GM12878 (cell line): ENCODE measurements at regions of chr4 and their contacts with region 1.

Region 1: DNA sequence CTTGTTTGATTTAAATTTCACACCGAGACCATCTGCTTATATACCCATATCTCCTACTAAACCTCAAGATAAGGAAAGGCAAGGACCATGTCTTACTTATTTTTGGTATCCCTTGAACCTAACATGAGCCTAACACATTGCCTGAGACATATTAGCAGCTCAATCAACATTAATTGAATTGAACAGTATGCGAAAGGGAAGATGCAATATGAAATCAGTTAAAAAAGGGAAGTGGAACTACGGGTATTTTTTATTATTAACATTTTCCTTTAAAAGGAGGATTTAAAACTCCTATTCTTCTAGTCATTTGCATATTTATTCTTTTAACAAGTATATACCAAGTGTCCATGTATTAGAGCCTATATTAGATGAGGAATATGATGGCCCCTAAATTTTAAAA is 197.0 kb downstream of the CAMK2D start:
- DNase-seq: no peak
- ATAC-seq: peak; percentile 45
- H3K4me3 ChIP-seq: peak overlapping the region; percentile 12; the same call in 1 of the 2 replicates
- H3K27ac ChIP-seq: peak overlapping the region; percentile 60
- H3K4me1 ChIP-seq: peaks cover 38% of the 10 kb centered on the region
- H3K27me3 ChIP-seq: no peaks in the 10 kb centered on the region
- CTCF ChIP-seq: no peak
- EP300 ChIP-seq: no peak
- POLR2A ChIP-seq: no peak
- RAD21 ChIP-seq: no peak

Region 2: GRCh38 chr4:113232194-113232593 is 332.3 kb before region 1 on chr4:
- CTCF ChIA-PET with region 1: no interaction called
- POLR2A ChIA-PET with region 1: no interaction called
- RAD21 ChIA-PET with region 1: no interaction called
- SMC1A ChIA-PET with region 1: no interaction called
- in situ Hi-C with region 1: no loop called
- intact Hi-C with region 1: no loop called
- DNase-seq: no peak
- ATAC-seq: no peak
- H3K4me3 ChIP-seq: no peak overlapping the region
- H3K27ac ChIP-seq: no peak overlapping the region
- H3K4me1 ChIP-seq: no peaks in the 10 kb centered on the region
- H3K27me3 ChIP-seq: no peaks in the 10 kb centered on the region
- CTCF ChIP-seq: no peak
- EP300 ChIP-seq: no peak
- POLR2A ChIP-seq: no peak
- RAD21 ChIP-seq: no peak

Region 3: DNA sequence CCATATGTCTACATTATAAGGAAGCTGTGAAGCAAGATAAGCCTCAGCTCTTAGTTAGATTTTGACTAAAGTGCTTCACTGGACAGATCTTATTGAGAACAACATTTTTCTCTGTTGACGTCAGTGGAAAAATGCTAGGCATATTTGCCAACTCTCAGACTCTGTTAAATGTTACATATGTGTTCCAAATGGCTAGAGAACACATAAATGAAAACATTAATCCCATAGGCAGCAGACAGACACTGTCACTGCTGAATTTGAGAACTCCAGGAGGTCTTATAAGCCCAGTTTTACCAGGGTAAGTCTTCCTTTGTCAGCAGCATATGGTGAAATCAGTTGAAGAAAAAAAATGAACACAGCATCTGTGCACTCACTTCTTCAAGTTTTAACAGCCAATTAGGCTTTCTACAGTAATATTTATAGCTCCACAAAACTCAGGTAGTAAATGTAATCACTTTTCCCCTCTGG is 10.2 kb after region 1 on chr4:
- CTCF ChIA-PET with region 1: interaction called, 12 read pairs
- POLR2A ChIA-PET with region 1: interaction called, 4 read pairs
- RAD21 ChIA-PET with region 1: interaction called, 9 read pairs
- SMC1A ChIA-PET with region 1: interaction called, 151 read pairs
- in situ Hi-C with region 1: no loop called
- intact Hi-C with region 1: no loop called
- DNase-seq: no peak
- ATAC-seq: no peak
- H3K4me3 ChIP-seq: no peak overlapping the region
- H3K27ac ChIP-seq: no peak overlapping the region
- H3K4me1 ChIP-seq: no peaks in the 10 kb centered on the region
- H3K27me3 ChIP-seq: no peaks in the 10 kb centered on the region
- CTCF ChIP-seq: no peak
- EP300 ChIP-seq: no peak
- POLR2A ChIP-seq: no peak
- RAD21 ChIP-seq: no peak

Region 4: DNA sequence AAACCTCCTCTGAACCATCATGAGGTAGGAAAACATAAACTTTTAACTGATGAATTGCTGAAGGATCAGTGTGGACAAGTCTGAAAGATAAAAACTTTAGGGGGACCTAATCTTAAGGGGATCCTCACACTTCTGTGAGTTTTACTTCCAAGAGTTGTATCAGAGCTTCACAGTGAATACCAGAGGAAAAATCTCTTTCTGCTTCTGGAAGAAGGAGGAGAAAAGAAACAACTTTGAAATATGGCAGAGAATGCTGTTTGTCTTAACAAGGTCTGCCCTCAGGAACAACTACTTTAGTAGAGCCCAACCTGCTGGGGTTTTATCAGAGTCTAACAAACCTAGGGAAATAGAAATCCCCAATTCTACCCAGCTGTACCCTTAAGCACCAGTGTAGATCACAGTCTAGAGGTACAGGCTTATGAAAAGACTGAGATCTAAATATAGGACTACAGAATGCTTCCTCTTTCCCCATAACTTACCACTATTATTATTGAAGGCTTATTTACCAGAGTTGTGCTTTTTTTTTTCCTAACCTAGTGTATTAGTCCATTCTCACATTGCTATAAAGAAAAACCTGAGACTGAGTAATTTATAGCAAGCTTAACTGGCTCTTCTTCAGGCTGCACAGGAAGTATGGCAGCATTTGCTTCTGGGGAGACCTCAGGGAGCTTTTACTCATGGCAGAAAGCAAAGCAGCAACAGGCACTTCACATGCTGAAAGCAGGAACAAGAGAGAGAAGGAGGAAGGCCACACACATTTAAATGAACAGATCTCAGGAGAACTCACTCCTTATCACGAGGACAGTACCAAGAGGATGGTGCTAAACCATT is 29.1 kb after region 1 on chr4:
- CTCF ChIA-PET with region 1: interaction called, 3 read pairs
- POLR2A ChIA-PET with region 1: interaction called, 4 read pairs
- RAD21 ChIA-PET with region 1: interaction called, 41 read pairs
- SMC1A ChIA-PET with region 1: interaction called, 32 read pairs
- in situ Hi-C with region 1: no loop called
- intact Hi-C with region 1: no loop called
- DNase-seq: peak; percentile 8
- ATAC-seq: peak; percentile 84
- H3K4me3 ChIP-seq: no peak overlapping the region
- H3K27ac ChIP-seq: no peak overlapping the region; the same call in 1 of the 2 replicates
- H3K4me1 ChIP-seq: peaks cover 10% of the 10 kb centered on the region; the same call in 1 of the 2 replicates
- H3K27me3 ChIP-seq: no peaks in the 10 kb centered on the region
- CTCF ChIP-seq: no peak
- EP300 ChIP-seq: no peak
- POLR2A ChIP-seq: no peak
- RAD21 ChIP-seq: no peak

Region 5: GRCh38 chr4:113645771-113646441 is 81.4 kb after region 1 on chr4:
- CTCF ChIA-PET with region 1: interaction called, 3 read pairs
- POLR2A ChIA-PET with region 1: interaction called, 4 read pairs
- RAD21 ChIA-PET with region 1: interaction called, 16 read pairs
- SMC1A ChIA-PET with region 1: interaction called, 11 read pairs
- in situ Hi-C with region 1: no loop called
- intact Hi-C with region 1: no loop called
- DNase-seq: no peak
- ATAC-seq: no peak
- H3K4me3 ChIP-seq: no peak overlapping the region
- H3K27ac ChIP-seq: no peak overlapping the region
- H3K4me1 ChIP-seq: peaks cover 7% of the 10 kb centered on the region
- H3K27me3 ChIP-seq: no peaks in the 10 kb centered on the region
- CTCF ChIP-seq: no peak
- EP300 ChIP-seq: no peak
- POLR2A ChIP-seq: no peak
- RAD21 ChIP-seq: no peak

Region 6: GRCh38 chr4:113756005-113756410 is 191.5 kb after region 1 on chr4:
- CTCF ChIA-PET with region 1: interaction called, 3 read pairs
- POLR2A ChIA-PET with region 1: interaction called, 7 read pairs
- RAD21 ChIA-PET with region 1: interaction called, 30 read pairs
- SMC1A ChIA-PET with region 1: interaction called, 21 read pairs
- in situ Hi-C with region 1: loop called (anchors 5 kb)
- intact Hi-C with region 1: no loop called
- DNase-seq: peak; percentile 51
- ATAC-seq: peak; percentile 72
- H3K4me3 ChIP-seq: peak overlapping the region; percentile 75; the same call in 1 of the 2 replicates
- H3K27ac ChIP-seq: peak overlapping the region; percentile 72
- H3K4me1 ChIP-seq: no peaks in the 10 kb centered on the region
- H3K27me3 ChIP-seq: no peaks in the 10 kb centered on the region
- CTCF ChIP-seq: no peak
- EP300 ChIP-seq: peak; percentile 84 to 95
- POLR2A ChIP-seq: no peak
- RAD21 ChIP-seq: no peak

Region 7: GRCh38 chr4:114116861-114117260 is 552.4 kb after region 1 on chr4:
- CTCF ChIA-PET with region 1: no interaction called
- POLR2A ChIA-PET with region 1: no interaction called
- RAD21 ChIA-PET with region 1: no interaction called
- SMC1A ChIA-PET with region 1: no interaction called
- in situ Hi-C with region 1: no loop called
- intact Hi-C with region 1: no loop called
- DNase-seq: no peak
- ATAC-seq: no peak
- H3K4me3 ChIP-seq: no peak overlapping the region
- H3K27ac ChIP-seq: no peak overlapping the region
- H3K4me1 ChIP-seq: no peaks in the 10 kb centered on the region
- H3K27me3 ChIP-seq: no peaks in the 10 kb centered on the region
- CTCF ChIP-seq: no peak
- EP300 ChIP-seq: no peak
- POLR2A ChIP-seq: no peak
- RAD21 ChIP-seq: no peak